Vagina (tissue), 2 donors: ENCODE measurements at regions of chr9 and their contacts with region 1.

Region 1: DNA sequence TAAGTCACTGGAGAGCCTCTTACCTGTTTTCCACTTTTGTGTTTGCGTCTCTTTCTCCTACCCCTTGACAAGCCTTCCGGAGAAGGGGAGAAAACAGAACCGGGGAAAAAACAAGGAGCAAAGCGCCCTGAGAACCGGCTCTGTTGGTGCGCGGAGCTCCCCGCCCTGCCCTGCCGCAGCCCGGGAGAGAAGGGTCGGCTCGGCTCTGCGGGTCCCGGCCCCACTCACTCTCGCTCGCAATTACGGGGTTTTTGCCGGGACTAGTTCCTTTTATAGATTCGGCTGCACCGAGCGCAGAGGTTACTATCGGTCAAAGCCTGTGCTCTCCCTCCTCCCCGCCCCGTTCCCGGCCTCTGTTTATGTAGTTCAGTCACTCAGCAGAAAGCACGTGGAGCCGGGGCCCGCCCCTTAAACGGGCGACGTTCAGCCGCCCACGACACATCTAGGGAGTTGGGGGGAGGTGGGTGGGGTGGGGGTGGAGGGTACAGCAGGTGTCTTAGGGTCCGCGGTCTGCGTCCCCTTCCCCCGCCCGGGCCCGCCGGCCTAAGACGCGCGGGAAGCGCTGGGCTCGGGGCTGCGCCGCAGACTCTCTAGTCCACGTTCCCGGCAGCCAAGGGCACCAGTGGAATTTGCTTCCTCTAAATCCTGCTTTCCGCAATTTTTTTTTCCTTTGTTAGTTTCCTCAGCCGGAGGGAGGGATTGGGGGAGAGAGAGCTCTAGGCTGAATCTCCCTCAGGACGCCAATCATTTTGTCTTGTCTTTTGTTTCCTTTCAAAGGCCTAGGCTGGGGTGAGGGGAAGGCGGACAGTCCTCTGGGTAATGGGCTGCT is at the start of gene ABCA1:
- DNase-seq: peak in 1 of 2 donors; percentile 96
- H3K4me3 ChIP-seq: peak within 1 kb of the TSS; percentile 76 to 89
- H3K27ac ChIP-seq: peak within 1 kb of the TSS; percentile 85
- H3K4me1 ChIP-seq: peaks cover 33% of the 10 kb centered on the region
- H3K27me3 ChIP-seq: no peaks in the 10 kb centered on the region
- CTCF ChIP-seq: no peak
- POLR2A ChIP-seq: peak in 1 of 2 donors; percentile 57
- total RNA-seq, gene ABCA1: 30.7 TPM

Region 2: DNA sequence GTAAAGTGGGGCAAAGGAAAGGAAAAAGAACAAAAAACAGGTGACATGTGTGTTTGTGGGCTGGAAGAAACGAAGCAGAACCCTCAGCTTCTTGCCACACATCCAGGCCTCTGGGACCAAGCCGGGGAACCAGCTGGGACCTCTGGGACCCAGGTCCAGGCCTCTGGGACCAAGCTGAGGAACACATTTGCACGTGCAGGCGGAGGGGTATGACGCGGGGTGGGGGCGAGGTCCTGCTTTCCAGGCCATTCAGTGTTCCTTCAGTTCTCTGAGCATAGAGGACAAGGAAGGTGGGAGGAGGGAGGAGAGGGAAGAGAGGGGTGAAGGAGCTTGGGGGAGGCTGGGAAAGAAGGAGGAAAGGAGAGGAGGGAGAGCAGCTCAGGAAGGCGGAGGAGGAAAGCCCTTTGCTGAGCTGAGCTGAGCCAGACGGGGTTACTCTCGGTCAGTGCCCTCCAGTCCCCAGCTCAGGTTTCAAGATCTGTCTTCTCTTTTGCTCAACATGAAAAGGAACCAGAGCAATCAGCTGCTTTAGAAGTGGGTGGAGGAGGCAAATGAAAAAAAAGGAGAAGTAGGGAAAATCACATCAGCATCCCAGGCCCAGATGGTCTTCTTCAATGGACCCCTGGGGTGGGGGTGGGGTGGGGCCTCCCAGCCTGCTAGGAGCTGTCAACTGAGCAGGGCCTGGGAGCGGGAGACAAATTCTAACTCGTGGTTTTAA is 59.3 kb before region 1 on chr9:
- intact Hi-C with region 1: loop called (anchors 5 kb)
- DNase-seq: peak in 1 of 2 donors; percentile 94
- H3K4me3 ChIP-seq: no peak overlapping the region
- H3K27ac ChIP-seq: peak overlapping the region; percentile 70
- H3K4me1 ChIP-seq: peaks cover 56% of the 10 kb centered on the region
- H3K27me3 ChIP-seq: no peaks in the 10 kb centered on the region
- CTCF ChIP-seq: no peak
- POLR2A ChIP-seq: no peak

Region 3: GRCh38 chr9:104885818-104886709 is 42.1 kb before region 1 on chr9:
- intact Hi-C with region 1: no loop called
- DNase-seq: no peak
- H3K4me3 ChIP-seq: no peak overlapping the region
- H3K27ac ChIP-seq: no peak overlapping the region
- H3K4me1 ChIP-seq: no peaks in the 10 kb centered on the region
- H3K27me3 ChIP-seq: no peaks in the 10 kb centered on the region
- CTCF ChIP-seq: no peak
- POLR2A ChIP-seq: no peak

Region 4: GRCh38 chr9:104968025-104968982 is 40.2 kb after region 1 on chr9:
- intact Hi-C with region 1: loop called (anchors 1 kb)
- DNase-seq: peak in 1 of 2 donors; percentile 95
- H3K4me3 ChIP-seq: peak overlapping the region; percentile 61 to 69
- H3K27ac ChIP-seq: peak overlapping the region; percentile 89
- H3K4me1 ChIP-seq: peaks cover 29% of the 10 kb centered on the region
- H3K27me3 ChIP-seq: no peaks in the 10 kb centered on the region
- CTCF ChIP-seq: no peak
- POLR2A ChIP-seq: no peak

Region 5: GRCh38 chr9:104991144-104991953 is 63.2 kb after region 1 on chr9:
- intact Hi-C with region 1: loop called (anchors 2 kb)
- DNase-seq: peak in 1 of 2 donors; percentile 98
- H3K4me3 ChIP-seq: peak overlapping the region; percentile 64 to 68
- H3K27ac ChIP-seq: peak overlapping the region; percentile 94
- H3K4me1 ChIP-seq: peaks cover 43% of the 10 kb centered on the region
- H3K27me3 ChIP-seq: no peaks in the 10 kb centered on the region
- CTCF ChIP-seq: no peak
- POLR2A ChIP-seq: peak in 1 of 2 donors; percentile 36

Region 6: DNA sequence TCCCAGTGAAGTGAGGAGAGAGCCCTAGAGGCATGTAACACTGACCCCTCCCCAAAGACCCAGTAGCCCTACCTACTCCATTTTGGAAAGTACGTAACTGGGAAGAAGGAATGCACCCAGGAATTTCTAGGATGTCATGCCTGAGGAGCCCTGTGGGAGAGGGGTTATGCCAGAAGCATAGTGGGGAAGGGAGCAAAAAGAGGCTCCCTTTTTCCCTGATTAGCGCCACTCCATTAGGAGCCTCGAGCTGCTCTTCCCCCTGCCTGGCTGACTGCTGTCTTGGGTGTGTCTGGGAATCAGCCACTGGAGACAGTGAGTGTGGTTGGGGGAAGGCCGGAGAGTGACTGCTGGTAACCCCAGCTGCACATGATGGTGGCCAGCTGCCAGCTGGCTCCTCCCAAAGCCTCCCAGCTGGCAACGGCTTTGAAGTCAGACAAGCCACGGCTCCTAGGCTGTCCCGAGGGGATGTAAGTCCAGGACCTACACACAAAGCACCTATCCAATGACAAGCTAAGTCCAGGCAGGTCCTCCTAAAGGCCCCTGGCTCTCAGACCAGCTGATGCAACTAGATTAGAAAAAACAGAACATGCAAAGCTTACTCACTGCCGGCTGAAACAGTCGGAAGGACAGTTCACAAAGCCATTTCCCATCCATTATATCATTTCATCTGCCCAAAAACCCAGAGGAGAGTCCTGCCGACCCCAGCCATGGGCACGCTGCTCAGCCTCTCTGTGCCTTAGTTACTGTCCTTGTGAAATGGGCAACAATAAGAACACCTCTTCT is 136.4 kb after region 1 on chr9:
- intact Hi-C with region 1: loop called (anchors 10 kb)
- DNase-seq: peak in 1 of 2 donors; percentile 98
- H3K4me3 ChIP-seq: no peak overlapping the region
- H3K27ac ChIP-seq: peak overlapping the region; percentile 80
- H3K4me1 ChIP-seq: peaks cover 26% of the 10 kb centered on the region
- H3K27me3 ChIP-seq: no peaks in the 10 kb centered on the region
- CTCF ChIP-seq: no peak
- POLR2A ChIP-seq: peak in 1 of 2 donors; percentile 47

Region 7: DNA sequence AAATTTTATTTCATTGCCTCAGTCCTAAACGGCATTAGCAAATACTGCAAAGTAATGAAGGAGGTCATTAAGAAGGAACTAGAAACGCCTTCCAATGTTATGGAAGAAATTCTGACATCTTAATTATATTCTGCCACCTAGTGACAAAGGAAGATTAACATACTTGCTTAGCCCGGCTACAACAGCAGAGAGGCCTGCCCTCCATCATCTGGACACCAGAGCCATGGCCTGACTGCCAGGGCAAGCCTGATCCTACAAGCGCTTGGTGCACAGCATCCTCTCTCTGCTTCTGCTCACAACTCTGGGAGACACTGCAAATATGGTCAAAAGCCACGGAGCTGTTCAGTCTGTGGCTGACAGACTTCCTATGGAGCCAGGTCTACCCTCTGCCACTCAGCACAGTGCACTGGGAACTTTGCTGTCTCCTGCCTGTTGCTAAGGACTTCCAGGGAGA is 229.0 kb after region 1 on chr9:
- intact Hi-C with region 1: loop called (anchors 5 kb)
- DNase-seq: peak in 1 of 2 donors; percentile 92
- H3K4me3 ChIP-seq: no peak overlapping the region
- H3K27ac ChIP-seq: no peak overlapping the region
- H3K4me1 ChIP-seq: no peaks in the 10 kb centered on the region
- H3K27me3 ChIP-seq: no peaks in the 10 kb centered on the region
- CTCF ChIP-seq: peak; percentile 41 to 52 (median 51)
- POLR2A ChIP-seq: no peak

Region 8: DNA sequence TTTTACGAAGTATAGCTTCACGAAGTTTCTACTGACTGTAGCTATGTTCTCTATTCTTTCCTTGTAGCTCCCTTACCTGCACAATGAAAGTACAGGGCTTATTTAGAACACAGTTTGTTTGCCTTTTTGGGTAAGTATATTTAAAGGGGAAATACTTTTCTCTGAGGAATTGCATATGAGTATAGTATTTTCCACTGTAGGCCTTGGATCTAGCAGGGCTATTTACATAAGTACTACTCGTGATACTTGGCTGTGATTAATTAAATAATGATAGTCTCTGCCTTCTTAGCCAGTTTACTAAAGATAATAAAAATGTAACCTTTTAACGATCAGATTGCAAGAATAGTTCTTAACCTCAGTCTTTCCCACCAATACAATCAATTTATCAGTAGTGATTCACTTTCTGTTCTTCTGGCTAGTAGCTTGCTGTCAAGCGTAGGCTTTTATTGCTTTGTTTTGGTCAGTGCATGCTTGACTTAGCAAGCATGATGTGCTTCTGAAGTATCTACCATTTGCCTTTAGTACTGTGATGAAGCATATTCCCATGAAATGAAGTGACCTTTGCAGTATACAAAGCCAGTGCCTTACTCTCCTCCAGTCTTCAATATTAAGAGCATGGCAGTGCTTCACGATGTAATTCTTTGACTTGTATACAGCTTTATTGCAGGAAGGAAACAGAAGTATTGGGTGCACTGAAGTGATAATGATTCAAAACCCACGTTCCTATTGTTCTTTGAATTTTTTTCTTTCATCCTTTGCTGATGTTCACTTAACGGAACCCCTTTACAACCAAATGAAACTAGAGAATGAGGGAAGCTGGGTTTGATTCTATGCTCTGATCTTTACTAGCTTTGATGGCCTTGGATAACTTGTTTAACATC is 380.6 kb after region 1 on chr9:
- intact Hi-C with region 1: no loop called
- DNase-seq: no peak
- H3K4me3 ChIP-seq: no peak overlapping the region
- H3K27ac ChIP-seq: no peak overlapping the region
- H3K4me1 ChIP-seq: peaks cover 11% of the 10 kb centered on the region
- H3K27me3 ChIP-seq: no peaks in the 10 kb centered on the region
- CTCF ChIP-seq: no peak
- POLR2A ChIP-seq: no peak